Mammary epithelial cell (primary cell): ENCODE measurements at regions of chr12 and their contacts with region 1.

Region 1: DNA sequence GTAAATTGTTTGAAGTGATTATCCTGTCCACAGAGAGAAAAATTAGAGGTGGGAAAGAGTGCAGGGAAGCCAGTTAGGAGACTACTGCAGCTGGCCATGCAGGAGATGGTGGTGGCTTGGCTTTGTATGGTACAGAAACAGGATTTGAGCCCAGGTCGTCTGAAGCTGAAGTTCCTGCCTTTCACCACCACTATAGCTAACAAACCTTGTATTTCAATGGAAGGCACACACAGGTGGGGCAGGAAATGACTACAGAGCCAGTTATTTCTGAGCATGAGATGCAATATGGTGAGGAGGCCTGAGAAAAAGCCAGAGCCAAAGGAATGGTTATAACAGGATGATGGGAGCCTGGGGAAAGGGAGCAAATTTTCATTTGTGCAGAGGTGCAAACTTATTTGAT is 103.9 kb downstream of the BTG1 start:
- DNase-seq: peak; percentile 81
- H3K4me3 ChIP-seq: no peak overlapping the region
- H3K27ac ChIP-seq: peak overlapping the region; percentile 27
- H3K4me1 ChIP-seq: peaks cover 27% of the 10 kb centered on the region
- H3K27me3 ChIP-seq: no peaks in the 10 kb centered on the region
- CTCF ChIP-seq: no peak

Region 2: GRCh38 chr12:92078167-92079053 is 36.7 kb after region 1 on chr12:
- CTCF ChIA-PET with region 1: no interaction called
- dilution Hi-C with region 1: no loop called
- in situ Hi-C with region 1: no loop called
- intact Hi-C with region 1: loop called (anchors 1 kb)
- DNase-seq: peak; percentile 97
- H3K4me3 ChIP-seq: no peak overlapping the region
- H3K27ac ChIP-seq: peak overlapping the region; percentile 91
- H3K4me1 ChIP-seq: peaks cover 40% of the 10 kb centered on the region
- H3K27me3 ChIP-seq: no peaks in the 10 kb centered on the region
- CTCF ChIP-seq: no peak

Region 3: DNA sequence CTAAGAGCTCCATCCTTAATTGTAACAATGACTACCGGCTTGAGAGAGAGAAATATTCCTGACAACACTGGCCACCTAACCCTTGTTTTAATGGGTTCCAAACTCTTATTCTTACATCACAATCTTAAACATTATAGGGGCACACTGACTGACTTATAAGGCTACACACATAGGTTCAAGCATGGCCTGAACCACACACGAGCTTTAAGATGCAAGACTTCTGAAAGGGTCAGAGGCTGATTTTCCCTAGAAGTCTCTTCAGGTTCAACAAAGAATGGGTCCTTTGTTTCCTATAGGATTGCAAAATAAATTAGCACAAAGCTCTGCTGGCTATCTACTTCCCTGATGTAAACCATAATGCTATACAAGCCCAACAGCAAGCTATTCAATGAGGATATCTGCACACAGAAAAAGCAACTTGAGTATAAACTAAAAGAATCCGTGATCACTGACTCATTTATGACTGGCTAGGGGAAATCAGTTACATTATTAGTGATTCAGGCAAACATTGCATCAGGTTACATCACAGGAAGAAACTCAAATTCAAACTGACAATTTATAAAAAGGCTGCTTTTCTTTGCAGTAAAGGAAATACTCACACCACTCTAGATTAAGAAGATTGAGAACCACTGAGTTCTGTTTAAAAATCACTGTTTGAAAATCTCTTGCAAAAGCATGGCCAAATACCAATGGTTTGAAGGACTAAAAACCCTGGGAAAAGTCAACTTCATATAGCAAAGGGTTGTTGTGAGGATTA is 95.4 kb after region 1 on chr12:
- CTCF ChIA-PET with region 1: no interaction called
- dilution Hi-C with region 1: no loop called
- in situ Hi-C with region 1: no loop called
- intact Hi-C with region 1: loop called (anchors 1 kb)
- DNase-seq: peak; percentile 87
- H3K4me3 ChIP-seq: peak overlapping the region in 1 of 3 experiments; percentile 9
- H3K27ac ChIP-seq: peak overlapping the region; percentile 98
- H3K4me1 ChIP-seq: peaks cover 63% of the 10 kb centered on the region
- H3K27me3 ChIP-seq: no peaks in the 10 kb centered on the region
- CTCF ChIP-seq: no peak

Region 4: DNA sequence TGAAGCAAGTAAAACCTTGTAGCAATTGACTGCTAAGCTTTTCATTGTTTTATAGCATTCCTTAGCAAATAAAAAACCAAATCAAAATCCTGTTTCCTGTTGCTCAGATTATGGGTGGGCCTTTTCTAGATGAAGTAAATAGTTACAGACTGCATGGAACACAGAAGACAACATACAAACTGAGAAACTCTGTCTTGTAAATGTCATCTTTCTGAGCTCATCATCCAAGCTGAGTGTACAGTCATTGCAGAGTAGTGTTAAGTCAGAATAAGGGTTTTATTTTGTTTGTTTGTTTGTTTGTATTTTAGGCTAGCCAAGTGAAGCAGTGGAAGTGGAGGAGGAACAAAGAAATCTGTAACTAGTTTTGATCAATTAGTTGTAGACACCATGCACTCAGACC is 128.3 kb after region 1 on chr12:
- CTCF ChIA-PET with region 1: no interaction called
- dilution Hi-C with region 1: no loop called
- in situ Hi-C with region 1: no loop called
- intact Hi-C with region 1: no loop called
- DNase-seq: no peak
- H3K4me3 ChIP-seq: no peak overlapping the region
- H3K27ac ChIP-seq: no peak overlapping the region
- H3K4me1 ChIP-seq: no peaks in the 10 kb centered on the region
- H3K27me3 ChIP-seq: peaks cover 3% of the 10 kb centered on the region
- CTCF ChIP-seq: no peak

Region 5: DNA sequence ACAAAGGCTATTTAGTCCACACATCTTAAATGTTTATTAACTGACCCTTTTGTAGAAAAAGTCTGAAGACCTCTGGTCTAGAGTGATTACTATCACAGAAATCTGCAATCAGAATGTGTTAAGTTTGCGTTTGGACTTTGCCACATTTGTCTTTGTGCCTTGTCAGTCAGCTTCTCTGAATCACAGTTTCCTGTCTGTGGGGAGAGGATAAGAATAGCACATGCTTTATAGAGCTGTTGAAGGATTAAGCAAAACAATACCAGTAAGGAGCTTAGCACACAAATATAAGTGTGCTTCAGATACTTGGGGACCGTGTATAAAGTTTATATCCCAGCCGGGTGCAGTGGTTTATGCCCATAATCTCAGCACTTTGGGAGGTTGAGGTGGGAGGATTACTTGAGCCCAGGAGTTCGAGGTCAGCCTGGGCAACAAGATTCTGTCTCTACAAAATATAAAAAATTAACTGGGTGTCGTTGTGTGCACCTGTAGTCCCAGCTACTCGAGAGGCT is 166.9 kb after region 1 on chr12:
- CTCF ChIA-PET with region 1: no interaction called
- dilution Hi-C with region 1: no loop called
- in situ Hi-C with region 1: no loop called
- intact Hi-C with region 1: no loop called
- DNase-seq: peak; percentile 65
- H3K4me3 ChIP-seq: no peak overlapping the region
- H3K27ac ChIP-seq: no peak overlapping the region
- H3K4me1 ChIP-seq: peaks cover 6% of the 10 kb centered on the region
- H3K27me3 ChIP-seq: no peaks in the 10 kb centered on the region
- CTCF ChIP-seq: no peak